Activated CD4-positive, alpha-beta T cell treated with anti-CD3 and anti-CD28 coated beads for 36 hours (primary cell): ENCODE measurements at regions of chr3 and their contacts with region 1.

Region 1: DNA sequence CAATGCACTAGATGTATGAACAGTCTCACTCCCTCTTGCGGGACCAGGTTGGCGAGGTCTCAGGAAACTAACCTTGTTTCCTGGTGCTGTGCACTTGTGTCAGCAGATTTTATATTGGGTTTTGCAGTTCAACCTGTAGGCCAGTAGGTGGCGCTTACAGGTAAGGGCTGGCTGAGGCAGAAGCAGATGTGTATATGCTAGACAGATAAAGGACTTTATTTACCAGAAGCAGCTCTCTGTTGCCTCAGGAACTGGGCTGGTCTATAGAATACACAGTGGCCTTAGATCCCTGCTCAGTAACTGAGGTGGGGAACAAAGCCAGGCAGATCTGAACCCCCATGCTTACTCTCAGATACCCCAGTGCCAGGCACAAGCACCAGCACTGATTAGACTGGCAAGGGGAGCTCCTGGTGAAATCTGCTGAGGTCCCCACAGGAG is 296.8 kb downstream of the DOCK3 start:
- DNase-seq: peak; percentile 66
- ATAC-seq: peak; percentile 85
- H3K4me3 Mint-ChIP-seq: no peak overlapping the region
- H3K27ac Mint-ChIP-seq: no peak overlapping the region
- H3K4me1 Mint-ChIP-seq: peaks cover 19% of the 10 kb centered on the region
- H3K27me3 Mint-ChIP-seq: peaks cover 2% of the 10 kb centered on the region

Region 2: GRCh38 chr3:51190199-51190839 is 218.8 kb after region 1 on chr3:
- CTCF ChIA-PET with region 1: no interaction called
- POLR2A ChIA-PET with region 1: no interaction called
- intact Hi-C with region 1: loop called in 1 of 2 experiments (anchors 5 kb)
- DNase-seq: no peak
- ATAC-seq: no peak
- H3K4me3 Mint-ChIP-seq: no peak overlapping the region
- H3K27ac Mint-ChIP-seq: no peak overlapping the region
- H3K4me1 Mint-ChIP-seq: peaks cover 20% of the 10 kb centered on the region
- H3K27me3 Mint-ChIP-seq: peaks cover 2% of the 10 kb centered on the region

Region 3: GRCh38 chr3:51311055-51311454 is 339.5 kb after region 1 on chr3:
- CTCF ChIA-PET with region 1: interaction called, 7 read pairs
- POLR2A ChIA-PET with region 1: no interaction called
- intact Hi-C with region 1: loop called in 1 of 2 experiments (anchors 5 kb)
- DNase-seq: no peak
- ATAC-seq: no peak
- H3K4me3 Mint-ChIP-seq: no peak overlapping the region
- H3K27ac Mint-ChIP-seq: no peak overlapping the region
- H3K4me1 Mint-ChIP-seq: no peaks in the 10 kb centered on the region
- H3K27me3 Mint-ChIP-seq: no peaks in the 10 kb centered on the region

Region 4: GRCh38 chr3:51371943-51372557 is 400.5 kb after region 1 on chr3:
- CTCF ChIA-PET with region 1: interaction called, 24 read pairs
- POLR2A ChIA-PET with region 1: interaction called, 4 read pairs
- intact Hi-C with region 1: loop called (anchors 1 kb)
- DNase-seq: peak; percentile 72
- ATAC-seq: peak; percentile 74
- H3K4me3 Mint-ChIP-seq: no peak overlapping the region
- H3K27ac Mint-ChIP-seq: no peak overlapping the region
- H3K4me1 Mint-ChIP-seq: no peaks in the 10 kb centered on the region
- H3K27me3 Mint-ChIP-seq: peaks cover 3% of the 10 kb centered on the region